Endothelial cell of umbilical vein (primary cell): ENCODE measurements at regions of chr2 and their contacts with region 1.

Region 1: DNA sequence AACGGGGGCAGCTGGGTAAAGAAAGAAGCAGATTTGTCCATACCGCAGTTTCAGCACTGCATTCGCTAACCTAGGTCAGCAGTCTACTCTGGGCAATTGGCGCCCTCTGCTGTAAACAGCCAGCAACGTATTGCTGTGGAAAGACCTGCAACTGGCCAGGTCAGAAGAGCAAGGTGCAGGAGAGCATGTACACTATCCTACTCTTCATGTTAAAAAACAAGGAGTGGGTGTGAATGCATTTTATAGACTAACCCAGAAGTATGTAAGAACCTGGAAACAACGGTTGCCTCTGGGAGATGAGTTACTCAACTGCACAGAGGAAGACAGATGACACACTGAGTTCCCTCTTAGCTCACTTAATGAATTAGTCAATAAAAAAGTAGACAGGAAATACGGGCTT is 6.2 kb downstream of the MRPS5 start:
- DNase-seq: peak; percentile 64
- H3K4me3 ChIP-seq: no peak overlapping the region
- H3K27ac ChIP-seq: no peak overlapping the region
- H3K4me1 ChIP-seq: peaks cover 3% of the 10 kb centered on the region
- H3K27me3 ChIP-seq: no peaks in the 10 kb centered on the region
- CTCF ChIP-seq: peak; percentile 79 to 80
- POLR2A ChIP-seq: no peak

Region 2: DNA sequence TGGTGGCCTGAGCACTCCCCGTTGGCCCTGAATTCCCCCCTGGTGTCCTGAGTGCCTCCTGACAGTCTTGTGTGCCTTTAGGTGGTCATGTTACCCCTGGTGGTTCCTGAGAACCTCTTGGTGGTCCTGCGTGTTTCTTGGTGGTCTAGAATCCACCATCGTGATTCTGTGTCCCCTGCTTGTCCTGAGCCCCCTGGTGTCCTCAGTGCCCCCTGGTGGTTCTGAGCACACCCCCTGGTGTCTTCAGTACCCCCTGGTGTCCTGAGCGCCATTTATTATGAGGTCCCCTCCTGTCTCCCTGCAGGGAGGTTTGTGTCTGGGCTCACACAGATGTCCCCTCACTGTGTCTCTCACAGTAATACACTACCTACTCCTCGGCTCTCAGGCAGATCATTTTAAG is 151.2 kb before region 1 on chr2:
- CTCF ChIA-PET with region 1: no interaction called
- POLR2A ChIA-PET with region 1: no interaction called
- dilution Hi-C with region 1: no loop called
- intact Hi-C with region 1: no loop called
- DNase-seq: no peak
- H3K4me3 ChIP-seq: no peak overlapping the region
- H3K27ac ChIP-seq: no peak overlapping the region
- H3K4me1 ChIP-seq: no peaks in the 10 kb centered on the region
- H3K27me3 ChIP-seq: no peaks in the 10 kb centered on the region
- CTCF ChIP-seq: no peak
- POLR2A ChIP-seq: no peak

Region 3: DNA sequence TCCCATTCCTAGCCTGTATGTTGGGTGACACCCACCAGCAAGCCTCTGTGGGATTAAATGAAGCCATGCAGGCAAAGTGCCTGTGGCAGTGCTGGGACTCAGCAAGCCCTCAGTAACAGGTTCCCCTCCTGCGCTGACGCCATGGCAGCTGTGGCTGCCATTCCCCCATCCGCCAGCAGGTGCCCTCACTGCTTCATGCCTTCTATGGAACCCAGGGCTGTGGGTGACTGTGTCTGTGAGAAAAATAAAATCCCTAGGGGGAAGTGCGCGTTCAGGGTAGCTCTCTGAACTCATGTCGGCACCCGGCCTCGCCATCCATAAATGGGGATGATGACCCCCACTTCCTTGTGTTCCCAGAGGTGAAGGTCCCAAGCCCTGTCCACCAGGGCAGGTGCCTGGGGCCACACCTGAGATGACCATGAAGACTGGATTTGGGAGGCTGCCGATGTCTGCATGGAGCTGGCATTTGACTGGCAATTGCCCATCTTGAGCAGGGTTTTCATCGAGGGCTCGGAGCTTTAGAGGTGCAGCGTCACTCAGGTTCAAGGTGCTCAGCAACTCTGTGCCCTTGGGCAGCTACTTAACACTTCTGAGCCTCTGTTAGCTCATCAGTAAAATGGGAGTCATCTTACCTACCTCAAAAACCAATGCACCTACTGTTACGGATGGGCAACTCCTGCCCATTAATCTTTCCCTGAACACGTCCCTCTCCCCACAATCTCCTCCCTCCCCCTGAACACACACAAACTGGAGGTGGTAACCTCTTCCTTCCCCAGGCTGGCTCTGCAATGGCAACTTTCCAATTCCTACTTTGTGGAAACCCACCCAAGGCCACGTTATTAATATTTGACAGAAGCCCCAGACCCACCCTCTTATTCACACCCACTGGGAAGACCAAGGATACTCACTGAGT is 92.9 kb before region 1 on chr2:
- CTCF ChIA-PET with region 1: interaction called, 11 read pairs
- POLR2A ChIA-PET with region 1: no interaction called
- dilution Hi-C with region 1: no loop called
- intact Hi-C with region 1: loop called (anchors 1 kb)
- DNase-seq: peak; percentile 56
- H3K4me3 ChIP-seq: no peak overlapping the region
- H3K27ac ChIP-seq: no peak overlapping the region
- H3K4me1 ChIP-seq: no peaks in the 10 kb centered on the region
- H3K27me3 ChIP-seq: peaks cover 38 to 39% of the 10 kb centered on the region in 2 experiments
- CTCF ChIP-seq: peak; percentile 73 to 88
- POLR2A ChIP-seq: no peak

Region 4: GRCh38 chr2:95277246-95277906 is 162.0 kb after region 1 on chr2:
- CTCF ChIA-PET with region 1: no interaction called
- POLR2A ChIA-PET with region 1: no interaction called
- dilution Hi-C with region 1: no loop called
- intact Hi-C with region 1: no loop called
- DNase-seq: no peak
- H3K4me3 ChIP-seq: no peak overlapping the region
- H3K27ac ChIP-seq: no peak overlapping the region
- H3K4me1 ChIP-seq: no peaks in the 10 kb centered on the region
- H3K27me3 ChIP-seq: no peaks in the 10 kb centered on the region
- CTCF ChIP-seq: no peak
- POLR2A ChIP-seq: no peak